ENCODE measurements at regions of chr2 and their contacts with region 1.

Region 1: DNA sequence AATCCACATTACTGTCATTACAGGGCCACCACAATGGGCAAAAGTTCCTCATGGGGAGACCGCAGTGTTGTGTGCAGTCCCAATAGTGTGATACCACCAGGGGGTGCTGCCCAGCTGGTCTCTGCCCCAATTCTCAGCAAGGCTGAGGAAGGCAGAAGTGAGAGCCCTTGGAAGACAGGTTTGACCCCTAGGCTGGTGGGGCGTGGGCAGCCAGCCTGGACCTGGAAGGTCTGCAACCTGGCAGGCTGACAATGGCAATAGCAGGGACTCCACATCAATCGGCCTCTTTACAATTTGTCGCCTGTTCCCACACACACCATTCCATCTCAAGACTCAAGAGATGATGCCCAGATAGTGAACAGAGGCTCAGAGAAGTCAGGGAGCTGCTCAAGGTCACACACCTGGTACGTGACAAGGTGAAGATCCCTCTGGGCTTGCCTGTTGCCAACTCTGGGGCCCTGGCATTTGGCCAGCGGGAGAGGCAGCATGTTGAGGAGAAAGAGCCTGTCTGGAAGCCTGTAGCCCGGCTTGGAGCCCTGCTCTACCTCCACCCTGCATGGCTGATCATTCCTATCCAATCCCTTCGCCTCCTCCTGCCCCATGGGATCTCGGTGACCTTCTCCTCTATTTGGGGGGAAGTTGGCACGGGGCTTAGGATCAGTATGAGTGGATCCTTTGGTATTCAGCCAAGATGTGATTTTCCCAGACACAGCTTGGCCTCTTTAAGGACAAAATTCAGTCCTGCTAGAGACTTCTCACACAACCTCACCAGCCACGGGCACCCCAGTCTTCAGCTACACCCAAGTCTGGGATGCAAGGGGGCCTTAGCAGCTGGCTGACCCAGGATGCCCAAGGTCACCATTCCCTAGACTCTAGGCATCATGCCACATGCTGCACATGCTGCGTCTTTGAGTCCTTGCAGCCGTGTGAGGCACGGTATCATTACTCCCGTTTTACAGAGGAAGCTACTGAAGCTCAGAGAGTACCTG is 2.9 kb upstream of the ATOH8 start:
- DNase-seq: peak; percentile 89
- H3K4me3 Mint-ChIP-seq: no peak overlapping the region
- H3K27ac Mint-ChIP-seq: no peak overlapping the region
- H3K4me1 Mint-ChIP-seq: peaks cover 15% of the 10 kb centered on the region
- H3K27me3 Mint-ChIP-seq: peaks cover 81% of the 10 kb centered on the region

Region 2: DNA sequence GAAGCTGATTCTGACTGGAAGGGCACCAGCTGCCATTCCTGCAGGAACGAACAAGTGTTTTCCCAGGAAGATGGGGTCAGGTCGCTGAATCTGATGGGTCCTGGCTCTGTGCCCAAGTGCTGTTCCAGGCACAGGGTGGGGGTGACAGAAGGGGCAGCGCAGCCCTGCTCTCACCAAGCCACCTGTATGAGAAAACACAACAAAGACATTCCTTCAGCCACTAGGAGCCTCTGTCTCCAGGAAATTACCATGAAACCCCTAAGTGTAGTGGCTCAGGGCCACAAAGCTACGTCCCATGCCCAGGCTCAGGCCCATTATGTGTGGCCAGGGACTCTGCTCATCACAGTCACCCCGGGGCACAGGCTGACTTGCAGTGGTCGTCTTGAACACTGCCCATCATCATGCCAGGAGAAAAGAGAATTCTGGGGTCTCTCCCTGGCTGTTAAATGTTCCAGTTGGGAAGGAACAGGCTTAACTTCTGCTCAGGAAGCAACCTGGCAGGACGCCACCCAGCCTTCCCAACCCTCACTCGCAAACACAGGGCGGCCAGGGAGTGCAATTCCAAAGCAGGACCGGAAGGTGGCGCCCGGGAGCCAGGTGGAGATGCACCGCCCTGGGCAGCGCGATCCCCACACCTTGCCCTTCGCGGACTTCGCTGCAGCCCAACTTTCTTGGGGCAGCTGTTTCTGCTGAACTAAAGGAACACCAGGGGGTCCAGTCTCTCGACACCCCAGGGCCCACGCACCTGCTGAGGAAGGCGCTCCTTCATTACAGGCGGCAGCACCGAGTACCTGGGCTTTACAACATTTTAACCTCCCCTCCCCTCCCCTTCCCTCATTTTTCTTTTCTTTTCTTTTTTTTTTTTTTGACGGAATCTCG is 71.8 kb before region 1 on chr2:
- intact Hi-C with region 1: loop called (anchors 2 kb)
- DNase-seq: peak; percentile 95
- H3K4me3 Mint-ChIP-seq: peak overlapping the region; percentile 18
- H3K27ac Mint-ChIP-seq: no peak overlapping the region
- H3K4me1 Mint-ChIP-seq: peaks cover 24% of the 10 kb centered on the region
- H3K27me3 Mint-ChIP-seq: no peaks in the 10 kb centered on the region

Region 3: DNA sequence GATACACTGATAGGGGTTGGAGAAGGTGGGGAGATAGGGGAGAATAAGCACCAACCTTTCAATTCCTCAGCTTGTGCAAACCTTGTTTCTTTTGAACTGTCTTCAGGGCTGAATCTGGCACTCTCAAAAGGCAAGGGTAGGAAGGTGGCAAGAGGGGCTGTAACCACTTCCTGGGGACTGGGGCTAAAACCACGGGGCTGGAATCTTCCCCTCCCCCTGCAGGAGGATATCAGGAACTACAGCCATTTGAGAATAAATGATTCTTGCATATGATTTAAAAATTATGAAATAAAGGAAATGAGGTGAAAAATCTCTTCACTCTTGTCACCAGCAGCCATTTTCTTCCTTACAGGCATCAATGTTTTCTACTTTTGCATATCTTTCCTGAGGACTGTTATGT is 53.7 kb after region 1 on chr2:
- intact Hi-C with region 1: loop called (anchors 2 kb)
- DNase-seq: peak; percentile 77
- H3K4me3 Mint-ChIP-seq: no peak overlapping the region
- H3K27ac Mint-ChIP-seq: no peak overlapping the region
- H3K4me1 Mint-ChIP-seq: peaks cover 6% of the 10 kb centered on the region
- H3K27me3 Mint-ChIP-seq: peaks cover 6% of the 10 kb centered on the region

Measured in activated CD4-positive, alpha-beta T cell treated with anti-CD3 and anti-CD28 coated beads, Interleukin-2, amount 10 ng/mL, durations not matched to agents 24 days and 14 days (primary cell).